ENCODE measurements at regions of chr1 and their contacts with region 1.

Region 1: GRCh38 chr1:64268653-64269557 is 65.5 kb downstream of the UBE2U start:
- DNase-seq: peak; percentile 85
- H3K4me3 Mint-ChIP-seq: no peak overlapping the region
- H3K27ac Mint-ChIP-seq: no peak overlapping the region
- H3K4me1 Mint-ChIP-seq: peaks cover 2% of the 10 kb centered on the region
- H3K27me3 Mint-ChIP-seq: peaks cover 15% of the 10 kb centered on the region

Region 2: GRCh38 chr1:64403331-64403730 is 134.4 kb after region 1 on chr1:
- CTCF ChIA-PET with region 1: no interaction called
- intact Hi-C with region 1: loop called (anchors 10 kb)
- DNase-seq: no peak
- H3K4me3 Mint-ChIP-seq: no peak overlapping the region
- H3K27ac Mint-ChIP-seq: no peak overlapping the region
- H3K4me1 Mint-ChIP-seq: no peaks in the 10 kb centered on the region
- H3K27me3 Mint-ChIP-seq: no peaks in the 10 kb centered on the region

Region 3: GRCh38 chr1:64487061-64487460 is 218.2 kb after region 1 on chr1:
- CTCF ChIA-PET with region 1: no interaction called
- intact Hi-C with region 1: loop called (anchors 1 kb)
- DNase-seq: peak; percentile 21
- H3K4me3 Mint-ChIP-seq: no peak overlapping the region
- H3K27ac Mint-ChIP-seq: no peak overlapping the region
- H3K4me1 Mint-ChIP-seq: peaks cover 28% of the 10 kb centered on the region
- H3K27me3 Mint-ChIP-seq: peaks cover 2% of the 10 kb centered on the region

Region 4: DNA sequence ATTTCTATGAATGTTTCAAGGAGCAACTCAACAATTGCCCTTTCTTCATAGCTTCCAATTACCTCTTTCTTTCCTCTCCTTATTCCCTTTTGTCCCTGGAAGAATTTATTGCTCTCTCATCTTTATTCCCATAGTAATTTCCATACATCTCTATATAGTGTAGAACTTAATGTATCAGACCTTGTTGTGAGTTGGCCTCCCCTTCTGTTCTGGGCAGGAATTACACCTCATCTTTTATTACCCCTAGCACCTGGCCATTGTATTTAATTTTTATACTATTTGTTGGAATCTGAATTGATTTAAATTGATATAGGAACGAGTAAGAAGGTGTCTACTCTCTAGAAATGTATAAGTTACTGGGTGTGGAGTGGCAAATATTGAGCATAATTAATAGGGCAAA is 315.6 kb after region 1 on chr1:
- CTCF ChIA-PET with region 1: no interaction called
- intact Hi-C with region 1: loop called (anchors 1 kb)
- DNase-seq: no peak
- H3K4me3 Mint-ChIP-seq: no peak overlapping the region
- H3K27ac Mint-ChIP-seq: no peak overlapping the region
- H3K4me1 Mint-ChIP-seq: peaks cover 12% of the 10 kb centered on the region
- H3K27me3 Mint-ChIP-seq: no peaks in the 10 kb centered on the region

Region 5: GRCh38 chr1:64675718-64676345 is 406.9 kb after region 1 on chr1:
- CTCF ChIA-PET with region 1: interaction called, 24 read pairs
- intact Hi-C with region 1: loop called (anchors 2 kb)
- DNase-seq: no peak
- H3K4me3 Mint-ChIP-seq: no peak overlapping the region
- H3K27ac Mint-ChIP-seq: no peak overlapping the region
- H3K4me1 Mint-ChIP-seq: no peaks in the 10 kb centered on the region
- H3K27me3 Mint-ChIP-seq: no peaks in the 10 kb centered on the region

Region 6: DNA sequence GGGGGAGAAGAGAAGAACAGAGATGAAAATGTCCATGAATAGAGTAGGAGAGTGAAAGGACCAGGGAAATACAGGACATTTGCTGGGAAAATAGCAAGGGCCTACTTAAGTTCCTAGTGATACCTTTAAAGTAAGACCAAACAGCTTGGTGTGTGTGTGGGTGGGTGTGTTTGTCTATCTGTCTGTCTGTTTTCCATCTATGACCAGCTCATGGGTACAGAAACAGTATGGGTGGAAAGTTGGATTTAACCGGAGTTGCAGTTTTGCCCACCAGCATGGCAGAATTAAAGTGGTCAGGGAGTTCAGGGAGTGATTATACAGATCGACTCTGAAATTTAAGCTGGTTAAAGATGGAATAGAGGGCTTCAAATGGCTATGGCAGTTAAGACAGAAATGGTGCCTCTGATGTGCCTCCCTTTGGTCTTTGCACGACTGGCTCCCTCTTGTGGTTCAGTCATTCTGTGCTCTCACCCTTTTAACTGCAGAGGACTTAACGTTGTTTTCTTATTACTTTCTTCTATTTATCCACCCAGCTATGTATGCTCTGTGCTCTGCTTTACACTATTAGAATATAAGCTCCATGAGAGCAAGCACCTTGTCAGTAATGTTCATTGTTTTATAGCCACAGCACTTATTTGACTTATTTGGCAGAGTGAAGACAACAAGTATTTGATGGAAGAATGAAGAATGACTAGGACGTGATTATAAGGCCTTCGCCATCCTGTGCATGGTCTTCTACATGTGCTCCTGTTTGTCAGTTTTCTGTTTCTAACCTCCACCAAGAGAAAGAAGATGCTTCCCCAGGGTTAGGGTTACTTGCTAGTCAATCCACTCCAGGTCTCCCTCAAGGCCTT is 806.4 kb after region 1 on chr1:
- CTCF ChIA-PET with region 1: no interaction called
- intact Hi-C with region 1: loop called (anchors 5 kb)
- DNase-seq: peak; percentile 84
- H3K4me3 Mint-ChIP-seq: no peak overlapping the region
- H3K27ac Mint-ChIP-seq: no peak overlapping the region
- H3K4me1 Mint-ChIP-seq: peaks cover 20% of the 10 kb centered on the region
- H3K27me3 Mint-ChIP-seq: no peaks in the 10 kb centered on the region

Region 7: GRCh38 chr1:65209005-65209885 is 940.3 kb after region 1 on chr1:
- CTCF ChIA-PET with region 1: no interaction called
- intact Hi-C with region 1: loop called (anchors 5 kb)
- DNase-seq: peak; percentile 28
- H3K4me3 Mint-ChIP-seq: no peak overlapping the region
- H3K27ac Mint-ChIP-seq: no peak overlapping the region
- H3K4me1 Mint-ChIP-seq: peaks cover 23% of the 10 kb centered on the region
- H3K27me3 Mint-ChIP-seq: peaks cover 3% of the 10 kb centered on the region

Measured in activated naive CD4-positive, alpha-beta T cell treated with anti-CD3 and anti-CD28 coated beads for 36 hours (primary cell).